OCI-LY7 (cell line): ENCODE measurements at regions of chr2 and their contacts with region 1.

Region 1: GRCh38 chr2:147082850-147083522 is 761.8 kb upstream of the ACVR2A start:
- DNase-seq: peak; percentile 44
- H3K4me3 ChIP-seq: no peak overlapping the region
- H3K27ac ChIP-seq: no peak overlapping the region
- H3K4me1 ChIP-seq: no peaks in the 10 kb centered on the region
- CTCF ChIP-seq: peak; percentile 93

Region 2: DNA sequence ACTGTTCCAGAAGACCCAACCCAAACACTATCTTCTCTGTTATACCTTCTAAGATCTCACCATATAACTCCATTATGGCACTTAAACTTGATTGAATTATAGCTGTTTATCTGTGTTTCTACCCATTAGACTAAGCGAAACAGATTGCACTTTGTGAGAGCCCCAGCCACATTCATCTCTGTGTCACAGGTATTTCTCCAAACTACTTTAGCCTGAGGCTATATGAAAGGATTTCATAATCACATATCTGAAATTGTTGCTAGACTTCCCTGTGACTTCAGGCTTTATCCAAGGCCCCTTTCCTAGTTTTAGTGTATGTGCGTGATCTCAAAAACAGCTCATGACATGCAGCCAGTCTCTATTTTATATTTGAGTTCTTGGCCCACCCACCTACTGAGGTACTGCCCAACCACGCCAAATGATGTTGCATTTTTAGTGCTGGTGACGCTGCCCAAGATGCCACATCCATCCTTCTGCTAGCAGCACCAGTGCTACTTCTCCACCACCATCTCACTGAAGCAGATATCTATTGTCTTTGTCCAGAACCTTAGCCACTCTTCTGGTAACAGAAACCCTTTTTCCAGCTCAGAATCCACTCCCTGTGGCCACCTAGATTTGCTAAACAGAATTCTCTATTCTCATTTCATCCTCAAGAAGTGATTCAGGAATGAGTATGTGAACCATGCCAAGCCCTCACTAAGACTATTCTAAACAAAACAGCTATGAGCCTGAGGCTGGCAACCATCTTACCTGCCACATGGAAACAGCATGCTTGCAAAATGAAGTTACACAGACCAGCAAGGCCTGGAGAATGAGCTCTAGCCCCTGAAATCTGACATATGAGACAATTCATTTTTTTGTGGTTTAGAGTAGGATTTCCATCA is 17.1 kb after region 1 on chr2:
- CTCF ChIA-PET with region 1: no interaction called
- POLR2A ChIA-PET with region 1: no interaction called
- intact Hi-C with region 1: no loop called
- DNase-seq: no peak
- H3K4me3 ChIP-seq: no peak overlapping the region
- H3K27ac ChIP-seq: no peak overlapping the region
- H3K4me1 ChIP-seq: no peaks in the 10 kb centered on the region
- CTCF ChIP-seq: no peak

Region 3: DNA sequence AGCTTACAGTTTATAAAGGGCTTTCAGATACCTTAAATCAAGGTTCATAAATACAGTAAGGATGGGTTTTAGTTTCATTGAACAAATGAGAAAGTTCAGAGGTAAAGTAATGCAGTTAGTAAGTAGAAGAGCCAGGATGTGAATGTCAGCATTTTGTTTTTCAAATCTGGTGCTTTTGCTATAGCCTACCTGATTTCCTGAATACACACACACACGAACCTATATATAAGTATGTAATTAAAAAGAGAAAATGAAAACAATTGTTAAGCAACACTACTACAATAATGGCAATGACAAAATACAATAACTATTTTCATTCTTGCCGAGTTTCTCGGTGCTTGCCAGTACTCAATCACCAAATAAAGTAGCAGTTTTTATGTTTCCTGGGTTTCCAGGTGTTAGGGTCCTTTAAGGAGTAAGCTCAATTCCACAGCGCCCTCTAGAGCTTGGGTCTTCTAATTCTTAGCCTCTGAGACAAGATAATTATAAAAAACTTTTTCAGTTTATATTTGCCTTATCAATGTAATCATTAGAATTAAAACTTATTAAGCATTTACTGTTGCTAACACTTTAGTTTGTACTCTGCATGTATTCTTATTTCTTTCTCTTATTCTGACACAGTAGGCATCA is 248.9 kb after region 1 on chr2:
- CTCF ChIA-PET with region 1: no interaction called
- POLR2A ChIA-PET with region 1: no interaction called
- intact Hi-C with region 1: loop called (anchors 10 kb)
- DNase-seq: peak; percentile 47
- H3K4me3 ChIP-seq: no peak overlapping the region
- H3K27ac ChIP-seq: no peak overlapping the region
- H3K4me1 ChIP-seq: no peaks in the 10 kb centered on the region
- CTCF ChIP-seq: peak; percentile 80